IMR-90 (cell line): ENCODE measurements at regions of chr9 and their contacts with region 1.

Region 1: GRCh38 chr9:77163884-77164283 is 13.4 kb upstream of the VPS13A start:
- DNase-seq: peak; percentile 58
- ATAC-seq: peak; percentile 72
- H3K4me3 ChIP-seq: no peak overlapping the region
- H3K27ac ChIP-seq: no peak overlapping the region
- H3K4me1 ChIP-seq: peaks cover 4% of the 10 kb centered on the region; the same call in 1 of the 2 replicates
- H3K27me3 ChIP-seq: no peaks in the 10 kb centered on the region; the same call in 1 of the 2 replicates
- CTCF ChIP-seq: no peak
- POLR2A ChIP-seq: no peak
- RAD21 ChIP-seq: no peak

Region 2: GRCh38 chr9:77111408-77111807 is 52.5 kb before region 1 on chr9:
- CTCF ChIA-PET with region 1: no interaction called
- POLR2A ChIA-PET with region 1: no interaction called
- dilution Hi-C with region 1: no loop called
- in situ Hi-C with region 1: no loop called
- intact Hi-C with region 1: no loop called
- DNase-seq: no peak
- ATAC-seq: no peak
- H3K4me3 ChIP-seq: no peak overlapping the region
- H3K27ac ChIP-seq: no peak overlapping the region
- H3K4me1 ChIP-seq: no peaks in the 10 kb centered on the region
- H3K27me3 ChIP-seq: 0 out of 2 replicates have a peak, but pooled peaks cover 1% of the 10 kb centered on the region
- CTCF ChIP-seq: no peak
- POLR2A ChIP-seq: no peak
- RAD21 ChIP-seq: no peak

Region 3: DNA sequence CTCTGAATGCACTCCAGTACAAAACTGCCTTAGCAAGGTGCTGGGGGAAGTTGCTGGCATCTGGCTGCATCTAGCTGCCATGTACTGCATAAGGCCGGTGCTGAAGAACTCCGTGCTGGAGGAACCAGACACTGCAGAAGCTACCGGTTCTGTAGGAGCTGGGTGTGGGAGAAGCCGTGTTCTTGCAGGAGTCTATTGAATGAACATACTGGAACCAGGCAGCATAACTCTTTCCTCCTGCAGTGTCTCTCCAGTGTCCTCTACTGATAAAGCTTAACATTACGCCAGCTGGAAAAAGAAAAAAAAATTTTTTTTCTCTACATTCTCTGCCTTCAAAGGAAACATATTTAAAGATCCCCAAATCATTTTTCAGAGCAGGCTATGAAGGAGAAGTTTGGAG is 52.0 kb after region 1 on chr9:
- CTCF ChIA-PET with region 1: interaction called, 17 read pairs
- POLR2A ChIA-PET with region 1: no interaction called
- dilution Hi-C with region 1: no loop called
- in situ Hi-C with region 1: no loop called
- intact Hi-C with region 1: loop called (anchors 1 kb)
- DNase-seq: peak; percentile 55
- ATAC-seq: peak; percentile 66
- H3K4me3 ChIP-seq: no peak overlapping the region
- H3K27ac ChIP-seq: no peak overlapping the region
- H3K4me1 ChIP-seq: 0 out of 2 replicates have a peak, but pooled peaks cover 2% of the 10 kb centered on the region
- H3K27me3 ChIP-seq: no peaks in the 10 kb centered on the region
- CTCF ChIP-seq: peak; percentile 53
- POLR2A ChIP-seq: no peak
- RAD21 ChIP-seq: peak; percentile 55

Region 4: DNA sequence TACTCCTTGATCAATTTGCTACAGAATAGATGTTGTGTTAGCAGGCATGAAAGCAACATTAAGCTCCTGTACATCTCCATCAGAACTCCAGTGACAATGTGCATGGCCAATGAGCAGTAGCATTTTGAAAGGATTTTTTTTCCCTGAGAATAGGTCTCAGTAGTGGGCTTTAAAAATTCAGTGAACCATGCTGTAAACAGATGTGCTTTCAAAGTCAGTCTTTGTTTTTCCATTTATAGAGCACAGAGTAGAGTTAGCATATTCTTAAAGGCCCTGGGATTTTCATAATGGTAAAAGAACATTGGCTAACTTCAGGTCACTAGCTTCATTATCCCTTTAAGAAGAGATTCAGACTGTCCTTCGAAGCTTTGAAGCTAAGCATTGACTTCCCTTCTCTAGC is 164.2 kb after region 1 on chr9:
- CTCF ChIA-PET with region 1: no interaction called
- POLR2A ChIA-PET with region 1: no interaction called
- dilution Hi-C with region 1: no loop called
- in situ Hi-C with region 1: no loop called
- intact Hi-C with region 1: no loop called
- DNase-seq: no peak
- ATAC-seq: no peak
- H3K4me3 ChIP-seq: no peak overlapping the region
- H3K27ac ChIP-seq: no peak overlapping the region
- H3K4me1 ChIP-seq: no peaks in the 10 kb centered on the region
- H3K27me3 ChIP-seq: no peaks in the 10 kb centered on the region
- CTCF ChIP-seq: no peak
- POLR2A ChIP-seq: no peak
- RAD21 ChIP-seq: no peak